Mammary epithelial cell (primary cell): ENCODE measurements at regions of chr6 and their contacts with region 1.

Region 1: GRCh38 chr6:3732345-3733141 is 19.0 kb downstream of the PXDC1 start:
- DNase-seq: peak; percentile 70
- H3K4me3 ChIP-seq: no peak overlapping the region
- H3K27ac ChIP-seq: no peak overlapping the region
- H3K4me1 ChIP-seq: peaks cover 12% of the 10 kb centered on the region
- H3K27me3 ChIP-seq: no peaks in the 10 kb centered on the region
- CTCF ChIP-seq: peak; percentile 68 to 98

Region 2: GRCh38 chr6:3125815-3126214 is 606.7 kb before region 1 on chr6:
- CTCF ChIA-PET with region 1: no interaction called
- dilution Hi-C with region 1: no loop called
- in situ Hi-C with region 1: no loop called
- intact Hi-C with region 1: loop called (anchors 5 kb)
- DNase-seq: no peak
- H3K4me3 ChIP-seq: no peak overlapping the region
- H3K27ac ChIP-seq: no peak overlapping the region
- H3K4me1 ChIP-seq: no peaks in the 10 kb centered on the region
- H3K27me3 ChIP-seq: no peaks in the 10 kb centered on the region
- CTCF ChIP-seq: no peak

Region 3: GRCh38 chr6:3403238-3404173 is 329.0 kb before region 1 on chr6:
- CTCF ChIA-PET with region 1: no interaction called
- dilution Hi-C with region 1: no loop called
- in situ Hi-C with region 1: no loop called
- intact Hi-C with region 1: loop called (anchors 2 kb)
- DNase-seq: peak; percentile 81
- H3K4me3 ChIP-seq: no peak overlapping the region
- H3K27ac ChIP-seq: peak overlapping the region; percentile 85
- H3K4me1 ChIP-seq: peaks cover 33% of the 10 kb centered on the region
- H3K27me3 ChIP-seq: no peaks in the 10 kb centered on the region
- CTCF ChIP-seq: no peak

Region 4: GRCh38 chr6:3410385-3411360 is 321.9 kb before region 1 on chr6:
- CTCF ChIA-PET with region 1: interaction called, 4 read pairs
- dilution Hi-C with region 1: no loop called
- in situ Hi-C with region 1: loop called in 1 of 2 experiments (anchors 10 kb)
- intact Hi-C with region 1: loop called (anchors 1 kb)
- DNase-seq: no peak
- H3K4me3 ChIP-seq: no peak overlapping the region
- H3K27ac ChIP-seq: no peak overlapping the region
- H3K4me1 ChIP-seq: peaks cover 15% of the 10 kb centered on the region
- H3K27me3 ChIP-seq: no peaks in the 10 kb centered on the region
- CTCF ChIP-seq: peak; percentile 76 to 88

Region 5: DNA sequence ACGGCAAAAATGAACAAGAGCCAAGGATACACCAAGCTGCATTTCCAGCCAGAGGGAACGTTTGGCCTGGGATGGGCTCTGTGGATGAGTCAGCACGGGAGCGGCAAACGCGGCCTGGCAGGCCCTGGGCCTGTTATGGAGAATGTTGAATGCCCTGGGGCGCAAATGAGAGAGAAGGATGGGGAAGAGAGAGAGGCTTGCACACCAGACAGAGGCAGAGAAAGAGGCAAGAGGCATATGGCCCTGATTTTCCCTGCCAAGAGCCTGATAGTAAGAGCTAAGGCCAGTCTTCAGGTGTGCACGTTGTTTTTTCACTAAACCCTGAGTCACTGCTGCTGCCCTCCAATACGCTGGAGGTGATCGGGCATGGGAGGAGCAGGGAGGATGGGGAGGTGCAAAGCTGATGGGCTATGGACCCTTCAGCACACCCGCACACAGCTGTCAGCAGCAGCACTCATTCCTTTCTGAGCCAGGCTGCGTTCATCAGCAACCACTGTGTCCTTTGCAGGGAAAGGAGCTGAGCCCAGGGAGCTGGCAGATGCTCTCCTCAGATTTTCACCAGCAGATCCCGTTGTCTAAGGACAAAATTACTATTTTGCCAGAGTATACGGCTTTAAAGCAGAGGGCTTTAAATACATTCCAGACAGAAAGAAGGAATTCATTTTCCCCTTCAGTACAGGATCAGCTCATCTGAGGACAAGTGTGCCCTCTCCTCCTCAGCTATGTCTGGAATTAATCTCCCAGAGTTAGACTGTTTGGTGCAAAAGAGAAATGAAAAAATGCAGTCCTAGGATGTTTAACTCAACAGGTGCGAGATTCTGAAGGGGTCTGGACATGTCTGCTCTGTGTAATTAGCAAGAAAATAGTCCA is 214.0 kb before region 1 on chr6:
- CTCF ChIA-PET with region 1: no interaction called
- dilution Hi-C with region 1: no loop called
- in situ Hi-C with region 1: no loop called
- intact Hi-C with region 1: loop called (anchors 1 kb)
- DNase-seq: peak; percentile 94
- H3K4me3 ChIP-seq: no peak overlapping the region
- H3K27ac ChIP-seq: peak overlapping the region; percentile 79
- H3K4me1 ChIP-seq: peaks cover 39% of the 10 kb centered on the region
- H3K27me3 ChIP-seq: no peaks in the 10 kb centered on the region
- CTCF ChIP-seq: no peak

Region 6: DNA sequence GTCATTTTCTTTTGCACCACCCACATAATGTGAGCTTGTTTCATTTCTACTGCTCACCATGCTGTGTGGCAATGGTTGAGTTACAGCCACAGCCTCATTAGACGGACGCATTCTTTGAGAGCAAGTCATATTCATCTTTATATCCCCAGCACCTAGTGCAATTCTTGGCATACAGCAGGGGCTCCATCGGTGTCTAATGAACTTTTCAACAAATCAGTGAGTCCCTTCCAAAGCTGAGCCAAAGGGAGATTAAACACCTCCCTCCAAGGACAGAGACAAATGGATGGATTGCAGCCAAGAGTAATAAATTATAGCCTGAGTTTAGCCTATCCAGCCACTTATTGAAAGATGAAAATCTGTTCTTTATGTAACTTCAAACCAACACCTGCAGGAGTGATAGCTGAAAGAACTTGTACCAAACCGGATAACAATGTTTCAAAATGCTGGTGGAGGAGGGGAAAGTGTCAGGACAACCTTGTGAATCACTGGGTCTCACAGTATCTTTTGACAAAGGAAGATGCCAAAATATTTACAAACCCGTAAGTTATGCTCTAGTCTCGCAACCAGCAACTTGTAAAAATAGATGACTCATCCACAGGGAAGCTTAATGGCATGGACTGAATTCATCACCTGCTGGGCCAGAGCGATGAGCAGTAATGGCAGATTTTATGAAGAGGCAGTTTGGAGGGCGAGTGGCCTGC is 120.1 kb before region 1 on chr6:
- CTCF ChIA-PET with region 1: interaction called, 7 read pairs
- dilution Hi-C with region 1: no loop called
- in situ Hi-C with region 1: no loop called
- intact Hi-C with region 1: loop called (anchors 1 kb)
- DNase-seq: peak; percentile 95
- H3K4me3 ChIP-seq: no peak overlapping the region
- H3K27ac ChIP-seq: peak overlapping the region; percentile 69
- H3K4me1 ChIP-seq: peaks cover 31% of the 10 kb centered on the region
- H3K27me3 ChIP-seq: no peaks in the 10 kb centered on the region
- CTCF ChIP-seq: no peak